ENCODE measurements at regions of chr16 and their contacts with region 1.

Region 1: GRCh38 chr16:31179747-31180459 is at the start of gene FUS:
- DNase-seq: peak; percentile 86 to 95 (median 92)
- H3K4me3 ChIP-seq: peak within 1 kb of the TSS; percentile 85
- H3K4me3 Mint-ChIP-seq: peak within 1 kb of the TSS; percentile 90 to 100 (median 97)
- H3K27ac ChIP-seq: peak within 1 kb of the TSS; percentile 96
- H3K27ac Mint-ChIP-seq: peak within 1 kb of the TSS; percentile 94 to 100 (median 96)
- H3K4me1 ChIP-seq: peaks cover 62% of the 10 kb centered on the region
- H3K4me1 Mint-ChIP-seq: peaks cover 53 to 70% (median 57%) of the 10 kb centered on the region in 3 donors
- H3K27me3 ChIP-seq: no peaks in the 10 kb centered on the region
- H3K27me3 Mint-ChIP-seq: peaks cover 0 to 8% of the 10 kb centered on the region in 2 donors
- total RNA-seq, gene FUS: 621 to 671 TPM

Region 2: GRCh38 chr16:30997887-30998711 is 181.8 kb before region 1 on chr16:
- CTCF ChIA-PET with region 1: no interaction called
- POLR2A ChIA-PET with region 1: interaction called, 12 read pairs
- DNase-seq: no peak
- H3K4me3 ChIP-seq: no peak overlapping the region
- H3K4me3 Mint-ChIP-seq: peak overlapping the region in 5 of 7 donors; percentile 47 to 92 (median 85)
- H3K27ac ChIP-seq: no peak overlapping the region
- H3K27ac Mint-ChIP-seq: peak overlapping the region in 2 of 8 donors; percentile 24 to 38
- H3K4me1 ChIP-seq: peaks cover 13% of the 10 kb centered on the region
- H3K4me1 Mint-ChIP-seq: peaks cover 0 to 9% (median 6%) of the 10 kb centered on the region in 3 donors
- H3K27me3 ChIP-seq: no peaks in the 10 kb centered on the region
- H3K27me3 Mint-ChIP-seq: no peaks in the 10 kb centered on the region

Region 3: GRCh38 chr16:31022544-31023251 is 157.2 kb before region 1 on chr16:
- CTCF ChIA-PET with region 1: no interaction called
- POLR2A ChIA-PET with region 1: no interaction called
- DNase-seq: no peak
- H3K4me3 ChIP-seq: no peak overlapping the region
- H3K4me3 Mint-ChIP-seq: no peak overlapping the region
- H3K27ac ChIP-seq: no peak overlapping the region
- H3K27ac Mint-ChIP-seq: peak overlapping the region in 1 of 8 donors; percentile 46
- H3K4me1 ChIP-seq: no peaks in the 10 kb centered on the region
- H3K4me1 Mint-ChIP-seq: no peaks in the 10 kb centered on the region
- H3K27me3 ChIP-seq: no peaks in the 10 kb centered on the region
- H3K27me3 Mint-ChIP-seq: peaks cover 0 to 3% of the 10 kb centered on the region in 2 donors

Region 4: DNA sequence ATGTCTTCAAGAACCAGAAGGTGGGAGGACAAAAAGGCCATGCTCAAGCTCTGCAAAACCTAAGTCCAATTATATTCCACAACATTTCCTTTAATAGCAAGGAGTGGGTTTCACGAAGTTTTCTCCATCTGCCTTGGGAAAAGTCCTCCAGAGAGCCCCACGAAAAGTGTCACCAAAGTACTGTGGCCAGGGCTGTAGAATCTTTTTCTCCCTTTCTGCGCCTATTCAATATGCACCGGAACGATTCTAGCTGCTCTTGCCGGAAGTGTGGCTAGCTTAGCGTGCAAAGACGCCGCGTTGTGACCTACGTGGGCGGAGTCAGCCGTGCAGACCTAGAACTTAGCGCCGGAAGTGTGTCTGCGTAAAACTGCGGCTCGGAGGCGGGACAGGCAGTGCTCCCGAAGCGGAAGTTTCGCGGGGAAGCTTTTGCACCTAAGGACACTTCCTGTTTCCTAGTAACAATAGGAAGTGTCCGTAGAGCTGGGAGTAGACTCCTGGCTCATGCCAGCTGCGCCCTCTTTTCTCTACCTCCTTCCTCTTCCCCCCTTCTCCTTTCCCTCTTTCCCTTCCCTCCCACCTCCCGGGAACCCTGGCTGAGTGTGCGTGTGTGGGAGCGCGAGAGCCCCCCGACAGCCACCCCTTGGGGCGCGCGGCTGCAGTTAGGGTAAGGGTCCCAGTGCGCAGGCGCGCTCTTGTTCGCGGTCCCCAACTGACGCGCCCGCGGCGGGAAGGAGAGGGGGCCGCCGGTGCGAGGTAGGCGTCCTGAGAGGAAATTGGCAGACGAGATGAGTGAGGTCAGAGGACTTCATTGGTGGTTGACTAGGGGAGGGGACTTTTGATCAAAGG is 105.7 kb before region 1 on chr16 and contains the starts of genes ZNF646 and ZNF668:
- CTCF ChIA-PET with region 1: no interaction called
- POLR2A ChIA-PET with region 1: interaction called, 11 read pairs
- DNase-seq: peak; percentile 96 to 99 (median 97)
- H3K4me3 ChIP-seq: peak within 1 kb of the TSS; percentile 100
- H3K4me3 Mint-ChIP-seq: peak within 1 kb of the TSS; percentile 87 to 97 (median 97)
- H3K27ac ChIP-seq: peak within 1 kb of the TSS; percentile 89
- H3K27ac Mint-ChIP-seq: peak within 1 kb of the TSS; percentile 89 to 100 (median 98)
- H3K4me1 ChIP-seq: peaks cover 24% of the 10 kb centered on the region
- H3K4me1 Mint-ChIP-seq: peaks cover 37 to 55% (median 41%) of the 10 kb centered on the region in 3 donors
- H3K27me3 ChIP-seq: no peaks in the 10 kb centered on the region
- H3K27me3 Mint-ChIP-seq: peaks cover 0 to 3% of the 10 kb centered on the region in 2 donors
- total RNA-seq, gene ZNF646: 23.4 to 25.9 TPM
- total RNA-seq, gene ZNF668: 15.9 to 20.5 TPM

Region 5: GRCh38 chr16:31117391-31118197 is 62.3 kb before region 1 on chr16 and contains the start of gene KAT8:
- CTCF ChIA-PET with region 1: no interaction called
- POLR2A ChIA-PET with region 1: interaction called, 18 read pairs
- DNase-seq: peak; percentile 96 to 98 (median 97)
- H3K4me3 ChIP-seq: peak within 1 kb of the TSS; percentile 90
- H3K4me3 Mint-ChIP-seq: peak within 1 kb of the TSS; percentile 83 to 95 (median 89)
- H3K27ac ChIP-seq: peak within 1 kb of the TSS; percentile 90
- H3K27ac Mint-ChIP-seq: peak within 1 kb of the TSS; percentile 76 to 99 (median 96)
- H3K4me1 ChIP-seq: peaks cover 12% of the 10 kb centered on the region
- H3K4me1 Mint-ChIP-seq: peaks cover 13 to 18% (median 16%) of the 10 kb centered on the region in 3 donors
- H3K27me3 ChIP-seq: no peaks in the 10 kb centered on the region
- H3K27me3 Mint-ChIP-seq: no peaks in the 10 kb centered on the region
- total RNA-seq, gene KAT8: 56.1 to 58.6 TPM

Region 6: DNA sequence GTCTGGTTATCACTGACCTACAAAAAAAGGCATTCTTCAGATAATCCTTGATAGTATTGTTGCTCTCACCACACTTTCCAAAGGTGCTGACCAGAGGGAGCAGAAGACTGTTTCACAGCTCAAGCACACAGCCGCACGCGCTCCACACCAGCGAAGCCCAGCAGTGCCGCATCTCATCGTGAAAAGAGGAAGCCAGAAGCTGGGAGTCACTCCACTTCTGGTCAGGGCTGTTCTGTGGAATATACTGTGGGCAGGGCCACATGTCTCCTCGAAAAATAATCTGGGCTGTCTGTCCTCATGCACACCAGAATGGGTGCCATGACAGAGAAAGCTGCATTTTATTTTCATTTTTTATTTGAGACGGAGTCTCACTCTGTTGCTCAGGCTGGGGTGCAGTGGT is 22.8 kb before region 1 on chr16:
- CTCF ChIA-PET with region 1: interaction called, 30 read pairs
- POLR2A ChIA-PET with region 1: interaction called, 4 read pairs
- DNase-seq: no peak
- H3K4me3 ChIP-seq: no peak overlapping the region
- H3K4me3 Mint-ChIP-seq: peak overlapping the region in 2 of 7 donors; percentile 32 to 55
- H3K27ac ChIP-seq: no peak overlapping the region
- H3K27ac Mint-ChIP-seq: no peak overlapping the region
- H3K4me1 ChIP-seq: peaks cover 6% of the 10 kb centered on the region
- H3K4me1 Mint-ChIP-seq: peaks cover 4 to 8% (median 6%) of the 10 kb centered on the region in 3 donors
- H3K27me3 ChIP-seq: no peaks in the 10 kb centered on the region
- H3K27me3 Mint-ChIP-seq: peaks cover 0 to 2% of the 10 kb centered on the region in 2 donors

Region 7: DNA sequence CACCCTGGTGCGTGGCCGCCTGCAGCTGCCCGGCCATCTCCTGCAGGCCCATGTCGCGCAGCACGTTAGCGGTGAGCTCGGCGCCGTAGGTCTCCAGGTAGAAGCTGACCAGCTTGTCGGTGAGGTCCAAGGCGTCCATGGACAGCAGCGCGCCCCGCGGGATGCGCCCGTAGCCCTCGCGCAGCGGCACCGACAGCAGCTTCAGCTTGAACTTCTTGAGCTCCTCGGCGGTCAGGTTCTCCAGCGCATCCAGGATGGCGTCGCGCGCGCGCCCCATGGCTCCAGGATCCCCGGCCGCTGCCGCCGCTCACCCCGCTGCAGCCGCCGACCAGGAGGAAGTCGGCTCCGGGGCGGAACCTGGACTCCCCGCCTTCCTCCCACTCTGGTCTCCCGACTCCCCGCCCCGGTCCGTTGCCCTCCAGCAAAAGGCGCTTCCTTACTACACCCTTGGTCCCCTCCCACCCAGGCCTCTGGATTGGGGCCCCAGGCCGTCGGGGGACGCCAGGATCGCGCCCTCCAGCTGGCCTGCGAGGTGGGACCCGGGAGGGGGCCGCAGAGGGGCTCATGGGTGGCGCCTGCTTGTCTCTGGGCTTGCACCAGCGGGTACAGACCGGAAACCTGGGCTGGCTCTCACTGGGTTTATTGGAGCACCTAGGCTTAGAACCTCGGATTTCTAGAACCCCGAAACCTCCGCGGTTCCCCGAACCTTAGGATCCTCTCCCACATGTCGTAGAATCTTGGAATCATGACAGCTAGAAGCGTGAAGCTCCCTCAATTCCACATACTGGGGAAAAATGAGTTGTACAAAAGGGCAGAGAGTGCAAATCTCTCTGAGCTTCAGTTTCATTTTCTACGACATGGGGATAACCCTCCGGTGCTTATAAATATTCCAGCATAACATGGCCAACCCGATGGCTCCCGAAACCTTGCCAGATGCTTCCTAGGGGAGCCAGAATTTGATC is 22.8 kb after region 1 on chr16 and contains the start of gene PYCARD:
- CTCF ChIA-PET with region 1: interaction called, 6 read pairs
- POLR2A ChIA-PET with region 1: interaction called, 40 read pairs
- DNase-seq: peak; percentile 17 to 53 (median 31)
- H3K4me3 ChIP-seq: peak within 1 kb of the TSS; percentile 83
- H3K4me3 Mint-ChIP-seq: peak within 1 kb of the TSS; percentile 80 to 96 (median 89)
- H3K27ac ChIP-seq: peak within 1 kb of the TSS; percentile 61
- H3K27ac Mint-ChIP-seq: peak within 1 kb of the TSS; percentile 65 to 96 (median 82)
- H3K4me1 ChIP-seq: peaks cover 40% of the 10 kb centered on the region
- H3K4me1 Mint-ChIP-seq: peaks cover 41 to 57% (median 47%) of the 10 kb centered on the region in 3 donors
- H3K27me3 ChIP-seq: no peaks in the 10 kb centered on the region
- H3K27me3 Mint-ChIP-seq: no peaks in the 10 kb centered on the region
- total RNA-seq, gene PYCARD: 4.5 to 5.9 TPM

Region 8: DNA sequence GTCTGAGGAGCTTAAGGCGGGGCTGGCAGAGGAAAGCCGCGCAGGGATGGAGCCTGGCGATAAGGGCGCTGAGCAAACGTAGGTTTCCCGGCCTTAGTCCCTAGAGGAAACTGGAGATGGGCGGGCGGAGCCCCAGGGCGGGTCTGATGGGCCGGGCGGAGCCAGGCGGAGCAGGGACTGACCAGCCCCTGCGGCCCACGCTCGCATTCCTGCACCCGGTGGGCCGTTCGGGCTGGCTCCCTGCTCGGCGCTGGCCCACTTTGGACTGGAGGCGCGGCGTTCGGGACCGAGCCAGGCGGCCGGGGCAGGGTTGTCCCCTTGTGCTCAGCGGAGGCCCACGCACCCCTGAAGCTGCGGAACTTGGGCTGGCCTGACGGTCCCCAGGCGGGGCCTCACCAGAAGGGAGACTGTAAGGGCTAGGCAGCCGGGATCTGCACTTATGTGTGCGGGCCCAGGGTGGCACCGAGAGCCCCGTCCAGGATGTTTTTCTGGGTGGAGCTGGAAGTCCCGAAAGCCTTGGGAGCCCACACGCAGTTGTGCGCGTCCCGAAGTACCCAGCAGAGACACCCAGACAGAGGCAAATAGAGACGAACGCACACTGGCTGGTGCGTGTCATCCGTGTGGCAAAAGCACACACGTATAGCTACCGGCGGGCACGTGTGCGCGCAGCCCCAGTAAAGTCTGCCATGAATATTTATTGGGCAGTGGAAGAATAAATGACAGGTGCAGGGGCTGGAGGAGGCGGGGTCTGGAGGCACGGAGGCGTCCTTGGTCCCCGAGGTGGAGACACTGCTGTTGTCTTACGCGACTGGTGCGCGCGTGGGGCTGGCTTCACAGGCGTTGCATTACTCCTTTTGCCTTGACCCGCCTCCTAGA is 35.6 kb after region 1 on chr16:
- CTCF ChIA-PET with region 1: no interaction called
- POLR2A ChIA-PET with region 1: interaction called, 10 read pairs
- DNase-seq: peak in 1 of 5 donors; percentile 26
- H3K4me3 ChIP-seq: peak overlapping the region; percentile 61
- H3K4me3 Mint-ChIP-seq: peak overlapping the region; percentile 63 to 87 (median 76)
- H3K27ac ChIP-seq: peak overlapping the region; percentile 38
- H3K27ac Mint-ChIP-seq: peak overlapping the region in 1 of 8 donors; percentile 47
- H3K4me1 ChIP-seq: peaks cover 20% of the 10 kb centered on the region
- H3K4me1 Mint-ChIP-seq: peaks cover 18 to 23% (median 21%) of the 10 kb centered on the region in 3 donors
- H3K27me3 ChIP-seq: peaks cover 31% of the 10 kb centered on the region
- H3K27me3 Mint-ChIP-seq: peaks cover 39 to 48% of the 10 kb centered on the region in 2 donors

Measured in CD8-positive, alpha-beta memory T cell (primary cell).